CD4-positive, alpha-beta memory T cell (primary cell): ENCODE measurements at regions of chr6 and their contacts with region 1.

Region 1: DNA sequence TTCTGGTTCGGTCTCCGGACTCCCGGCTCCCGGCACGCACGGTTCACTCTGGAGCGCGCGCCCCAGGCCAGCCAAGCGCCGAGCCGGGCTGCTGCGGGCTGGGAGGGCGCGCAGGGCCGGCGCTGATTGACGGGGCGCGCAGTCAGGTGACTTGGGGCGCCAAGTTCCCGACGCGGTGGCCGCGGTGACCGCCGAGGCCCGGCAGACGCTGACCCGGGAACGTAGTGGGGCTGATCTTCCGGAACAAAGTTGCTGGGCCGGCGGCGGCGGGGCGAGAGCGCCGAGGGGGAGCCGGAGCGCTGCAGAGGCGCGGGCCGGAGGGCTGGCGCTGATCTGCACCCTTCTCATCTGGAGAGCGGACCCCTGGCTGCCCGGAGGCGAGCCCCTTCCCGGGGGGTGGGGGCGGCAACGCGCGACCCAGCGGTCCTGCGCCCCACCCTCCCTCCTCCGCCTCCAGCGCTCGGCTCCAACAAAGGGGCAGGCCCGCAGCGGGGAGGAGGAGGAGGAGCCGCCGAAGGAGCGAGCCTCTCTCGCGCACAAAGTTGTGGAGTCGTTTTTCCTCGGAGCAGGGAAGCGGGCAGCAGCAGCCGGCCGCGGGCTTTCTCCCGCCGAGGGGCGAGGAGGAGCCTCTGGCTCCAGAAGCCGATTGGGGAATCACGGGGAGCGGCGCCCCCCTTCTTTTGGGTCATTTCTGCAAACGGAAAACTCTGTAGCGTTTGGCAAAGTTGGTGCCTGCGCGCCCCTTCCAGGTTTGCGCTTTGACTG is at the start of gene UTRN:
- DNase-seq: peak; percentile 18 to 40 (median 30)
- H3K4me3 ChIP-seq: peak within 1 kb of the TSS; percentile 65 to 89
- H3K4me3 Mint-ChIP-seq: peak within 1 kb of the TSS; percentile 88 to 98 (median 96)
- H3K27ac ChIP-seq: peak within 1 kb of the TSS; percentile 10
- H3K27ac Mint-ChIP-seq: peak within 1 kb of the TSS; percentile 53 to 86 (median 68)
- H3K4me1 ChIP-seq: peaks cover 20% of the 10 kb centered on the region
- H3K4me1 Mint-ChIP-seq: peaks cover 9 to 23% (median 18%) of the 10 kb centered on the region in 4 donors
- H3K27me3 ChIP-seq: no peaks in the 10 kb centered on the region
- H3K27me3 Mint-ChIP-seq: no peaks in the 10 kb centered on the region
- total RNA-seq, gene UTRN: 219 to 227 TPM

Region 2: DNA sequence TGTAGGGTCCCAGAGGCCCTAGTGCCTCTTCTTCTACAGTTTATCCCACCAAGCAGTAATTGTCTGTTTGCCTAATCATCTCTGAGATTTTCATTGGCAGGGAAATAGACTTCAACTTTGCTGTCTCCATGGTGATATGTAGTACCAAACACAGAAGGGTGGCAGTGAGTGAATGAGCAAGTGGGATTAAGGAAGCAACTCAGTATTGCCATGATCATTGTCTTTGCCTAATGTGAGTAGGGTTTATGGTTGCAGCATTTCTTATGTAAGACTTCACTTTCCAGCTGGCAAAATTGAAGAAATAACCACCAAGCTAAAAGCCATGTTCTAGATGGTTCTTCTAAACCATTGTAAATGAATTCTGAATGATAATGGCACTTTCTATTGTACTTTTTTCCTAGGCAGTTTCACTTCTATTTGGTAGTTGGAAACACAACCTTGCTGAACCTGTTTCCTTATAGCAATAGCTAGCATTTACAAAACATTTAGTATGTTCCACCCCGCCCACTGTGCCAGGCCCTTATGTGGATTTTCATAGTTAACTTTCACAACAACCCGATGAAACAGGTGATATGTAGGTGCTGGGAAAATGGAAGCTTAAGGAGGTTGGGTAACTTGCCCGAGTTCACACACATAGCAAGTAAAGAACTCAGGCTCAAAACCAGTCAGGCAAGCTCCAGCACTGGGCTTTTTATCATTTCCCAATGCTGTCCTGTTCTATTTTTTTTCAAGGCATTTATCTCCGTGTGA is 388.7 kb before region 1 on chr6:
- CTCF ChIA-PET with region 1: no interaction called
- POLR2A ChIA-PET with region 1: no interaction called
- intact Hi-C with region 1: no loop called
- DNase-seq: no peak
- H3K4me3 ChIP-seq: no peak overlapping the region
- H3K4me3 Mint-ChIP-seq: no peak overlapping the region
- H3K27ac ChIP-seq: no peak overlapping the region
- H3K27ac Mint-ChIP-seq: no peak overlapping the region
- H3K4me1 ChIP-seq: no peaks in the 10 kb centered on the region
- H3K4me1 Mint-ChIP-seq: peaks cover 0 to 2% (median 0%) of the 10 kb centered on the region in 4 donors
- H3K27me3 ChIP-seq: no peaks in the 10 kb centered on the region
- H3K27me3 Mint-ChIP-seq: no peaks in the 10 kb centered on the region

Region 3: GRCh38 chr6:144343701-144344428 is 58.9 kb after region 1 on chr6:
- CTCF ChIA-PET with region 1: no interaction called
- POLR2A ChIA-PET with region 1: interaction called, 10 read pairs
- intact Hi-C with region 1: no loop called
- DNase-seq: peak; percentile 74 to 85 (median 80)
- H3K4me3 ChIP-seq: peak overlapping the region; percentile 68 to 95
- H3K4me3 Mint-ChIP-seq: peak overlapping the region; percentile 87 to 98 (median 92)
- H3K27ac ChIP-seq: peak overlapping the region; percentile 75
- H3K27ac Mint-ChIP-seq: peak overlapping the region; percentile 93 to 99 (median 96)
- H3K4me1 ChIP-seq: peaks cover 65% of the 10 kb centered on the region
- H3K4me1 Mint-ChIP-seq: peaks cover 49 to 85% (median 69%) of the 10 kb centered on the region in 4 donors
- H3K27me3 ChIP-seq: no peaks in the 10 kb centered on the region
- H3K27me3 Mint-ChIP-seq: no peaks in the 10 kb centered on the region

Region 4: DNA sequence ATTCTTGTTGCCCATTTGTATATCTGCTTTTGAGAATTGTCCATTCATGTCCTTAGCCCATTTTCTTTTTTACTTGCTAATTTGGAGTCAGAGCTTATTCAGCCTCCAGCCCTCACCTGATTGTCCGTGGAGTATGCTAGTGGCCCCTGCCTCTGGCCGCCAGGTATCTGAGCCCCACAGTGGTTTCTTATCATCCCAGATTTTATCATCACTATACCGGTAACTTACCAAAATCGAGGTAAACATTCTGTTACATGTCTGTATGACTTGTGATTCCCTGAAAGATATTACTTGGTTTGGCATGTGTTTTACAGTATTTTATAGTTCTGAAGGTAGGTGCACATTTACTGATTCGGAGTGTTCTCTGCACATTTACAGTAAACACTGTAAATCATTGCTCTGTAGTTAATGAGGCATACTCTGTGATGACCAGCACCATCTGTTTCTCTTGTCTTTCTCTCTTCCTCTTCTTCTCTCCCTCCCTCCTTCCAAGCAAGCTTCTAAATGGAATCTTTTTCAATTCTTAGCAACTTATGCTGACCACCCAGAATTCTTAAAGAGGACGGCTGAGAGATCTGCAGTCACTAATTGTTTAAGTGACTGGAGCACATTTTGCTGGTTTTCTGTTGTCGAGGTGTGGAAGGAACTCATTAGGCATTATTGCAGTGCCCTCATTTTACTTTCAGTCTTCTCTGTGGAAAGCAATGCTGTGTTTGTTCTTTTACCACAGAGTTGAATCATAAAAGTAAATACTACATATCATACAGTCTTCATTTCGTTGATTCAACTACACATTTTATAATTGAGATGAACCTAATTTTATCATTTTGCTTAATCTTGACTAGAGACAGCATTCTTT is 126.6 kb after region 1 on chr6:
- CTCF ChIA-PET with region 1: interaction called, 3 read pairs
- POLR2A ChIA-PET with region 1: interaction called, 3 read pairs
- intact Hi-C with region 1: loop called (anchors 5 kb)
- DNase-seq: peak in 2 of 5 donors; percentile 5 to 17
- H3K4me3 ChIP-seq: no peak overlapping the region
- H3K4me3 Mint-ChIP-seq: peak overlapping the region; percentile 39 to 97 (median 82)
- H3K27ac ChIP-seq: no peak overlapping the region
- H3K27ac Mint-ChIP-seq: peak overlapping the region; percentile 71 to 96 (median 84)
- H3K4me1 ChIP-seq: peaks cover 49% of the 10 kb centered on the region
- H3K4me1 Mint-ChIP-seq: peaks cover 53 to 84% (median 66%) of the 10 kb centered on the region in 4 donors
- H3K27me3 ChIP-seq: no peaks in the 10 kb centered on the region
- H3K27me3 Mint-ChIP-seq: no peaks in the 10 kb centered on the region

Region 5: GRCh38 chr6:145067430-145067829 is 782.5 kb after region 1 on chr6:
- CTCF ChIA-PET with region 1: no interaction called
- POLR2A ChIA-PET with region 1: no interaction called
- intact Hi-C with region 1: no loop called
- DNase-seq: no peak
- H3K4me3 ChIP-seq: no peak overlapping the region
- H3K4me3 Mint-ChIP-seq: no peak overlapping the region
- H3K27ac ChIP-seq: no peak overlapping the region
- H3K27ac Mint-ChIP-seq: no peak overlapping the region
- H3K4me1 ChIP-seq: no peaks in the 10 kb centered on the region
- H3K4me1 Mint-ChIP-seq: no peaks in the 10 kb centered on the region
- H3K27me3 ChIP-seq: no peaks in the 10 kb centered on the region
- H3K27me3 Mint-ChIP-seq: peaks cover 3 to 9% of the 10 kb centered on the region in 2 donors